ENCODE measurements at regions of chr14 and their contacts with region 1.

Region 1: GRCh38 chr14:92585981-92586937 is 72.7 kb downstream of the RIN3 start:
- DNase-seq: peak; percentile 76
- ATAC-seq: peak; percentile 36
- H3K4me3 ChIP-seq: no peak overlapping the region
- H3K27ac ChIP-seq: peak overlapping the region; percentile 32; the same call in 1 of the 2 replicates
- H3K4me1 ChIP-seq: peaks cover 71% of the 10 kb centered on the region
- H3K27me3 ChIP-seq: no peaks in the 10 kb centered on the region
- CTCF ChIP-seq: no peak
- EP300 ChIP-seq: peak; percentile 60 to 61
- POLR2A ChIP-seq: no peak
- RAD21 ChIP-seq: no peak

Region 2: GRCh38 chr14:92392711-92393110 is 193.5 kb before region 1 on chr14:
- CTCF ChIA-PET with region 1: no interaction called
- POLR2A ChIA-PET with region 1: no interaction called
- RAD21 ChIA-PET with region 1: no interaction called
- SMC1A ChIA-PET with region 1: no interaction called
- in situ Hi-C with region 1: no loop called
- intact Hi-C with region 1: no loop called
- DNase-seq: no peak
- ATAC-seq: no peak
- H3K4me3 ChIP-seq: no peak overlapping the region
- H3K27ac ChIP-seq: no peak overlapping the region
- H3K4me1 ChIP-seq: no peaks in the 10 kb centered on the region
- H3K27me3 ChIP-seq: no peaks in the 10 kb centered on the region
- CTCF ChIP-seq: no peak
- EP300 ChIP-seq: no peak
- POLR2A ChIP-seq: no peak
- RAD21 ChIP-seq: no peak

Region 3: DNA sequence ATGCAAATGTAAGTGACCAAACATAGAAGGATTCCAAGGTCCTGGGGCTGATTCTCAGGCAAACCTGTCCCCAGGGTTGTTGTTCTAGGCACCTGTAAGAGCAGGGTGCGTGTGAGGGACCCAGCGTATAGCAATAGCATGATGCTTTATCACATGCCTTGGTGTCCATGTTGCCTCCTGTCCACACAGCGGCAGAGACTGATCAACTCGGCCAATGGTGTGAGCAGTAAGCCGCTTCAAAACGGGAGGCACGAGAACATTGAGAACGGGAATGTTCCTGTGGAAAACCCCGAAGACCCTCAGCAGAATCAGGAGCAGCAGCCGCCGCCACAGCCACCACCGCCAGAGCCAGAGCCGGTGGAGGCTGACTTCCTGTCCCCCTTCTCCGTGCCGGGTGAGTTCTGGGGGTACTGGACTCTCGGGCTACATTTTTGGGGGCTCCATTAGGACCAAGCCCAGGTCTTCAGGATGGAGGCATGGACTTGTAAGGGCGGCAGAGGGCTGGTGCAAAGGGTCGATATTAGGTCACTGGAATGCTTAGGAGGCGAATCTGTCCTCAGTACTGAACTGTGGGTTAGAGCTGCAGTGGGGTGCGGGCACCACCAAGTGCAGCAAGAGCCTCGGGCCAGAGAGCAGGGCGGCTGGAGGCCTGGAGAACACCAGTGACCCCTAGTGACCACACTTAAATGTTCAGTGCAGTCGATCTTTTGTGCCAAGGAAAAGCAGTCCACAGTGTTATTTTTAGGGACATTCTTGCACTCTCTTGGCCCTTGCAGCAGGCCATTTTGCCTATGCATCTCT is 129.8 kb before region 1 on chr14:
- CTCF ChIA-PET with region 1: interaction called, 26 read pairs
- POLR2A ChIA-PET with region 1: interaction called, 3 read pairs
- RAD21 ChIA-PET with region 1: interaction called, 14 read pairs
- SMC1A ChIA-PET with region 1: interaction called, 16 read pairs
- in situ Hi-C with region 1: no loop called
- intact Hi-C with region 1: no loop called
- DNase-seq: no peak
- ATAC-seq: peak; percentile 84
- H3K4me3 ChIP-seq: no peak overlapping the region
- H3K27ac ChIP-seq: no peak overlapping the region
- H3K4me1 ChIP-seq: peaks cover 9% of the 10 kb centered on the region
- H3K27me3 ChIP-seq: no peaks in the 10 kb centered on the region
- CTCF ChIP-seq: peak; percentile 75 to 89 (median 76)
- EP300 ChIP-seq: no peak
- POLR2A ChIP-seq: no peak
- RAD21 ChIP-seq: peak; percentile 75

Region 4: GRCh38 chr14:92563359-92563758 is 22.9 kb before region 1 on chr14:
- CTCF ChIA-PET with region 1: interaction called, 38 read pairs
- POLR2A ChIA-PET with region 1: interaction called, 7 read pairs
- RAD21 ChIA-PET with region 1: interaction called, 63 read pairs
- SMC1A ChIA-PET with region 1: interaction called, 137 read pairs
- in situ Hi-C with region 1: no loop called
- intact Hi-C with region 1: loop called (anchors 1 kb)
- DNase-seq: peak; percentile 53
- ATAC-seq: peak; percentile 96
- H3K4me3 ChIP-seq: no peak overlapping the region
- H3K27ac ChIP-seq: no peak overlapping the region; the same call in 1 of the 2 replicates
- H3K4me1 ChIP-seq: peaks cover 24% of the 10 kb centered on the region
- H3K27me3 ChIP-seq: no peaks in the 10 kb centered on the region
- CTCF ChIP-seq: no peak
- EP300 ChIP-seq: peak in 1 of 2 experiments; percentile 78; a peak in 1 of 4 replicates
- POLR2A ChIP-seq: no peak
- RAD21 ChIP-seq: no peak

Region 5: DNA sequence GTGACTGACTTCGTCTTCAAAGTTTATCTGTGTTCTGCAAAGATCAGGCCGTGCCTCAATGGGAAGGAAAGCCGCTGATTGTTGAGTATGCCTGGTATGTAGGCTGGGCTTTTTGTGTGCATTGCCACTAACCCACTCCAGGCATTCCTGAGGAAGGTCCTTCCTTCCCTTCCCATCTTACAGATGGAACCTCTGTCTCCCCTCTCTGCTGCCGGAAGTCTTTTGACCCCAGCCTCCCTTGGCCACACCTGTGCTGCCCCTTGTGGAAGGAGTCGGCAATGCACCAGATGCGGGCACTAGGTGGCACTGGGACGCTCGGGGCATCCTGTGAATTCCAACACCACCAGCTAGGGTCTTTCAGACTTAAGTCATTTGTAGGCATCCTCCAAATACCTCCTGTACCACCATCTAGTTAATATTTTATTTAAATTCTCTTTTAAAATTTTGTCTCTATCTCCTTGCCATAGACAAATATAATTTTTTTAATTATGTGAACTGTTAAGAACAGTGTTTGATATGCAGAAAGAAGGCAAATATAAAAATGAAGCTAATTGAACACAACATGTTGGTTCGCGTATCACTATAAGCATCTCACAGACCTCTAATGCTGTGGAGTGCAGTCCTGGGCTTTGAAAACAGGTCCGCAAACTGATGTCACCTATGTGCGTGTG is 26.9 kb after region 1 on chr14:
- CTCF ChIA-PET with region 1: interaction called, 18 read pairs
- POLR2A ChIA-PET with region 1: interaction called, 3 read pairs
- RAD21 ChIA-PET with region 1: interaction called, 15 read pairs
- SMC1A ChIA-PET with region 1: interaction called, 14 read pairs
- in situ Hi-C with region 1: no loop called
- intact Hi-C with region 1: no loop called
- DNase-seq: no peak
- ATAC-seq: peak; percentile 59
- H3K4me3 ChIP-seq: no peak overlapping the region
- H3K27ac ChIP-seq: no peak overlapping the region
- H3K4me1 ChIP-seq: peaks cover 8% of the 10 kb centered on the region
- H3K27me3 ChIP-seq: no peaks in the 10 kb centered on the region
- CTCF ChIP-seq: peak; percentile 90 to 91 (median 90)
- EP300 ChIP-seq: no peak
- POLR2A ChIP-seq: no peak
- RAD21 ChIP-seq: peak; percentile 81

Region 6: DNA sequence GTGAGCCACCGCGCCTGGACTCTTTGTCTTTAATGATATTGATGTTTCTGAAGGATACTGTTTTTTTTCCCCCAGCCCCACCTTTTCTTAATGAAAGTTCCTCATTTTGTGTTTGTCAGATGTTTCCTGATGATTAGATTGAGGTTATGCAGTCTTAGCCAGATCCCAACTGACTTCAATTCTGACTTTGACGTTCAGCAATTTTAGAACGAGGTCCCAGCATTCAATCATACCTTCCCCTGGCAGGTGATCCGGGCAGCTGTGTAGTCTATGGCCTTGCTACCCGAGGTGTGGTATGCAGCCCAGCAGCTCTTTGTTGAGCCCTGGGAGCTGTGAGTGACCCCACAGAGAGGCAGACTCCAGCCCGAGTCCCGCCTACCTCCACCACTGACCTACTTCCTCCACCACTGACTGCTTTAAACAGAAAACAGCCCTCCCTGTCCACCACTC is 79.4 kb after region 1 on chr14:
- CTCF ChIA-PET with region 1: interaction called, 12 read pairs
- POLR2A ChIA-PET with region 1: no interaction called
- RAD21 ChIA-PET with region 1: interaction called, 7 read pairs
- SMC1A ChIA-PET with region 1: interaction called, 7 read pairs
- in situ Hi-C with region 1: no loop called
- intact Hi-C with region 1: no loop called
- DNase-seq: no peak
- ATAC-seq: peak; percentile 20
- H3K4me3 ChIP-seq: no peak overlapping the region
- H3K27ac ChIP-seq: peak overlapping the region; percentile 43
- H3K4me1 ChIP-seq: peaks cover 27% of the 10 kb centered on the region
- H3K27me3 ChIP-seq: no peaks in the 10 kb centered on the region
- CTCF ChIP-seq: no peak
- EP300 ChIP-seq: no peak
- POLR2A ChIP-seq: no peak
- RAD21 ChIP-seq: no peak

Region 7: GRCh38 chr14:92686900-92687444 is 100.7 kb after region 1 on chr14:
- CTCF ChIA-PET with region 1: interaction called, 81 read pairs
- POLR2A ChIA-PET with region 1: no interaction called
- RAD21 ChIA-PET with region 1: interaction called, 31 read pairs
- SMC1A ChIA-PET with region 1: interaction called, 63 read pairs
- in situ Hi-C with region 1: no loop called
- intact Hi-C with region 1: no loop called
- DNase-seq: no peak
- ATAC-seq: peak; percentile 82
- H3K4me3 ChIP-seq: no peak overlapping the region
- H3K27ac ChIP-seq: no peak overlapping the region
- H3K4me1 ChIP-seq: no peaks in the 10 kb centered on the region
- H3K27me3 ChIP-seq: no peaks in the 10 kb centered on the region
- CTCF ChIP-seq: peak; percentile 78 to 89 (median 84)
- EP300 ChIP-seq: no peak
- POLR2A ChIP-seq: no peak
- RAD21 ChIP-seq: peak; percentile 64

Region 8: GRCh38 chr14:92832137-92832700 is 246.0 kb after region 1 on chr14:
- CTCF ChIA-PET with region 1: no interaction called
- POLR2A ChIA-PET with region 1: no interaction called
- RAD21 ChIA-PET with region 1: no interaction called
- SMC1A ChIA-PET with region 1: no interaction called
- in situ Hi-C with region 1: no loop called
- intact Hi-C with region 1: no loop called
- DNase-seq: no peak
- ATAC-seq: no peak
- H3K4me3 ChIP-seq: no peak overlapping the region
- H3K27ac ChIP-seq: no peak overlapping the region
- H3K4me1 ChIP-seq: no peaks in the 10 kb centered on the region
- H3K27me3 ChIP-seq: no peaks in the 10 kb centered on the region
- CTCF ChIP-seq: no peak
- EP300 ChIP-seq: no peak
- POLR2A ChIP-seq: no peak
- RAD21 ChIP-seq: no peak